GM12878 (cell line): ENCODE measurements at regions of chr1 and their contacts with region 1.

Region 1: DNA sequence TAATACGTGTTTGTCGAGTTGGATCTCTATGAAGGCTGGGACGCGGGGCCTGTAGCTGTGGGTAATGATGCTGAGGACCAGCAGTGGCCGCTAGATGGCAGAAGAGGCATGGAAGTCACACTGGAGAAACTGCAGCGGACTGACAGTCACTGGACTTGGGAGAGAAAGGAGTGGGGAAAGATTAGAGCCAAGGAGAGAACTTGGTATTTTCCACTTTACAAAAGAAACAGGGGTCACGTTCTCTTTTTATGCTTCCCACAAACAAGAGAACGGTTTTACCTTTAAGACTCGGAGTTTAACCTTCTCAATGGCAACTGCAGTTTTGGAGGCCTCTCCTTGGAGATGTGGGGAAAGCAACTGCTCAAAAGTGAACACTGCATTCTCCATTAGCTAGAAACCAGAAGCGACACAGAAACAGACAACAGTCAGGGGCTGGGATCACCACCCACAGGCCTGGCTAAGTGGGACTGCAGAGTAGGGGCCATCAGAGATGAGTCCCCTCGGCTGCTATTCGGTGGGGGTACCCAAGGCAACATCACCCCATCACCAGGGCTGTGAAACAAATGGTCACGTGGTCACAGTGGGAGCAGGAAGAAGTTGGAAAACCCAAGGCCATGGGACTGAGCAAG is 51.1 kb upstream of the EDEM3 start:
- DNase-seq: peak; percentile 55
- ATAC-seq: peak; percentile 99
- H3K4me3 ChIP-seq: no peak overlapping the region
- H3K27ac ChIP-seq: no peak overlapping the region
- H3K4me1 ChIP-seq: peaks cover 9% of the 10 kb centered on the region
- H3K27me3 ChIP-seq: no peaks in the 10 kb centered on the region
- CTCF ChIP-seq: peak; percentile 85 to 98 (median 87)
- EP300 ChIP-seq: no peak
- POLR2A ChIP-seq: no peak
- RAD21 ChIP-seq: peak; percentile 99

Region 2: DNA sequence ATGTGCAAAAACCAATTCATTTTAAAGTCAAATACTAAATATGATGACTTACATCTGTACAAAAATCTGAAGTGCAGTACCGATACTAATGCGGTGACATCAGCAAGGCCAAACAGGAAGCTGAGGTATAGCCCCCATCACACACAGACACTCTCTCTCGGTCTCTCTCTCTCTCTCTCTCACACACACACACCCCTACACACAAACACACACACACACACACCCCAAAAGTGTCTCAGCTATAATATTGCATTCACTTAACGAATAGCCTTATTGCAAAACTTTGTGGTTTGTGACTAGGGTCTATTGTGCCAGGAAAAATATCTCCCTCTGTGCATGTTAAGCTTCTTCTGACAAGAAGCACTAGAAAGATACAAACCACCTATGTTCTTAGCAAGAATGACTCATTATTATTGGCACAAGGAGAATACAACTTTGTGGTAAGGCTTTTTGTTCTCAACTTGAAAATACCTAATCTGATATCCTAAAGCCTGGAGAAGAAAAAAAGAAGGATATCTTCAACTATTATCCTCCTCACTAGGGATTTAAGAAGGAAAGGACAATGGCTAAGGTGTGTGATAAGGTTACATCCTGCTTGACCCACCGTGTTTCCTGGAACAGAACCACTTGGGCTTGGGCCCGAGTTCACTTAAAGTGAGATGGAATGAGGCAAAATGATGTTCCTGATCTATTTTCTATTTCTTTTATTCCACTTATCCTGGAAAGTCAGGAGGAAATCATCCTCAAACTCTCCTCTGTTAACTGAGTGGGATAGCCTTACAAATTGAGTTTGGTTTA is 61.4 kb after region 1 on chr1:
- CTCF ChIA-PET with region 1: interaction called, 5 read pairs
- POLR2A ChIA-PET with region 1: no interaction called
- RAD21 ChIA-PET with region 1: no interaction called
- SMC1A ChIA-PET with region 1: interaction called, 5 read pairs
- in situ Hi-C with region 1: no loop called
- intact Hi-C with region 1: loop called (anchors 5 kb)
- DNase-seq: peak; percentile 79
- ATAC-seq: peak; percentile 94
- H3K4me3 ChIP-seq: 0 out of 2 replicates have a peak overlapping the region, but pooled peaks have one; percentile 11
- H3K27ac ChIP-seq: peak overlapping the region; percentile 87
- H3K4me1 ChIP-seq: peaks cover 30% of the 10 kb centered on the region
- H3K27me3 ChIP-seq: no peaks in the 10 kb centered on the region
- CTCF ChIP-seq: no peak
- EP300 ChIP-seq: peak; percentile 84 to 87
- POLR2A ChIP-seq: no peak
- RAD21 ChIP-seq: no peak

Region 3: DNA sequence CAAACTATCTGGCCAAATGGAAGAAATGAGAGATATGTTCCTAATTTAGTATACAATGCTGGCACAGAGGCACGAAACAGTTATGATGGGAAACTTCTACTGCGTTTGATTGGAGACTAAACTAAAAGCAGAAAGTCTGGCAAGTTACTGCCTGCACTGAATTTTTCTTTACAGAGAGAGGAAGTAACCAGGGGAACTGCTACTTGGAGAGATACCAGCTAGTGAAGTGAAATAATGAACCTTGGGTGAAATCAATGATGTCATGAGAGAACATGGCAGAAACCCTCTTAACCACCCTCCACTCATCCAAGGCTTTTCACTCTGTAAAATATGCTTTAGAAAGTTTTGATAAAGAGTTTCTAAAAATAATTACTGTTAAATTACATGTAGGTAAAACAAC is 139.2 kb after region 1 on chr1:
- CTCF ChIA-PET with region 1: interaction called, 7 read pairs
- POLR2A ChIA-PET with region 1: interaction called, 3 read pairs
- RAD21 ChIA-PET with region 1: interaction called, 3 read pairs
- SMC1A ChIA-PET with region 1: interaction called, 19 read pairs
- in situ Hi-C with region 1: no loop called
- intact Hi-C with region 1: no loop called
- DNase-seq: peak; percentile 51
- ATAC-seq: peak; percentile 87
- H3K4me3 ChIP-seq: no peak overlapping the region
- H3K27ac ChIP-seq: peak overlapping the region; percentile 46
- H3K4me1 ChIP-seq: peaks cover 28% of the 10 kb centered on the region
- H3K27me3 ChIP-seq: no peaks in the 10 kb centered on the region
- CTCF ChIP-seq: no peak
- EP300 ChIP-seq: 0 out of 4 replicates have a peak, but pooled peaks of 1 of the 2 experiments have one; percentile 10
- POLR2A ChIP-seq: no peak
- RAD21 ChIP-seq: no peak

Region 4: GRCh38 chr1:184982002-184982954 is 176.5 kb after region 1 on chr1:
- CTCF ChIA-PET with region 1: interaction called, 353 read pairs
- POLR2A ChIA-PET with region 1: interaction called, 7 read pairs
- RAD21 ChIA-PET with region 1: interaction called, 152 read pairs
- SMC1A ChIA-PET with region 1: interaction called, 219 read pairs
- in situ Hi-C with region 1: loop called (anchors 5 kb)
- intact Hi-C with region 1: loop called (anchors 1 kb)
- DNase-seq: no peak
- ATAC-seq: peak; percentile 100
- H3K4me3 ChIP-seq: no peak overlapping the region
- H3K27ac ChIP-seq: no peak overlapping the region
- H3K4me1 ChIP-seq: no peaks in the 10 kb centered on the region
- H3K27me3 ChIP-seq: no peaks in the 10 kb centered on the region
- CTCF ChIP-seq: peak; percentile 86 to 95 (median 91)
- EP300 ChIP-seq: no peak
- POLR2A ChIP-seq: no peak
- RAD21 ChIP-seq: peak; percentile 97

Region 5: DNA sequence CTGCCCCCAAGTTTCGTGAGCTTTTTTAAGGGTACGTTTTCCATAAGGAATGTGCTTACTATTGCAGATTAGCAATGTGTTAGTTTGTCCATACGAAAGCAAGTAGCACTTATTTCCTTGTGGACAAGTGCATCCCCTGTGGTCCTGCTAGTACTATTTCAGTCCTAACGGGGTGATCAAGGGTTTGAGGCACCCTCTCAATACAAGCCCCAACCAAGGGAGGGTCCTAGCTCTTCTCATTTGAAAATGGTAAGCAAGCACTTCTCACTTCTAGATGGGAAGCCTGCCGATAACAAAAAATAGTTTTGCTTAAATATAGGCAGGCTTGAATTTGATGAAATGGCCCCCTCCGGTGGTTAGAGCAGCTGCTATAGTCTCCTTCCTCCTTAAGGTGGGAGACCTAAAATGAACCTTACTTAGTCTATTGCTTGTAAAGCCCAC is 864.4 kb after region 1 on chr1:
- CTCF ChIA-PET with region 1: no interaction called
- POLR2A ChIA-PET with region 1: no interaction called
- RAD21 ChIA-PET with region 1: interaction called, 3 read pairs
- SMC1A ChIA-PET with region 1: no interaction called
- in situ Hi-C with region 1: no loop called
- intact Hi-C with region 1: loop called (anchors 10 kb)
- DNase-seq: no peak
- ATAC-seq: peak; percentile 69
- H3K4me3 ChIP-seq: no peak overlapping the region
- H3K27ac ChIP-seq: no peak overlapping the region
- H3K4me1 ChIP-seq: no peaks in the 10 kb centered on the region
- H3K27me3 ChIP-seq: no peaks in the 10 kb centered on the region; a peak in 1 of 4 replicates
- CTCF ChIP-seq: peak; percentile 18 to 39 (median 21); a peak in 3 of 6 replicates
- EP300 ChIP-seq: no peak
- POLR2A ChIP-seq: no peak
- RAD21 ChIP-seq: peak; percentile 55